OCI-LY7 (cell line): ENCODE measurements at regions of chr15 and their contacts with region 1.

Region 1: DNA sequence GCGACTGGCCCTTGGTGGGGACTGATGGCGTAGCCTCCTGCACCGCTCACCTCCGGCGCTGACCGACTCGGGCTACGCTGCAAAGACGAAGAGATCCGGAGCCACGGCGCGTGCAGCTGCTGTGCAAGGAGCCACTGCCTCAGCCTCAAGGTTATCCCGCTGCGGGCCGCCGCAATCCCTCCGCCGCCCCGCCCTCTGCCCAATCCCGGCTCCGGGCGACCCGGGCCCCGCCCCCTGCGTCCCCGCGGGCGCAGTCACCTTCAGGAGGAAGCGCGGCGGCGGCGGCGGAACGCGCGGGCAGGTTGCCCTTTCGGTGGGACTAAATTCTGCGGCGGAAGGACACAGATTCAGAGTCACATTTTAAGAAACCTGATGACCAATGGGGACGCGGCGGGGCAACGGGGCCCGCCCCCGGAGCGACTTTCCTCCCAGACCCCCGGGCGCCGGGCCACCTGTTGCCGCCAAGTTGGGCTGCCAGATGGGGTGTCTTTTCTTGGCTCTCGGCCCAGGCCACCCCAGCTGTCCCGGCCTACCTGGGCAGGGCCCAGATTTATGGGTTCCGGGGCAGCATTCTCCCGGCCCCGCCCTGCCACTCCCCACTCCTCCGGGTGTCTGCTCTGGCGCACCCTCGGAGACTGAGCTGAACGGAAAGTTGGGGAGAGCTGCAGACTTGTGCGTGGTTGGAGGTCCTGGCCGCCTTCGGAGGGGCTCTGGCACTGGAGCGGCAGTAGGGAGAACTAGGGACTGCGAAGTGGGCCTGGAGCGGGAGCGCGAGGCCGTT is at the start of gene PKM:
- DNase-seq: peak; percentile 100
- H3K4me3 ChIP-seq: peak within 1 kb of the TSS; percentile 89
- H3K27ac ChIP-seq: peak within 1 kb of the TSS; percentile 86
- H3K4me1 ChIP-seq: peaks cover 32% of the 10 kb centered on the region
- CTCF ChIP-seq: no peak
- total RNA-seq, gene PKM: 861 and 917 TPM in 2 replicates

Region 2: DNA sequence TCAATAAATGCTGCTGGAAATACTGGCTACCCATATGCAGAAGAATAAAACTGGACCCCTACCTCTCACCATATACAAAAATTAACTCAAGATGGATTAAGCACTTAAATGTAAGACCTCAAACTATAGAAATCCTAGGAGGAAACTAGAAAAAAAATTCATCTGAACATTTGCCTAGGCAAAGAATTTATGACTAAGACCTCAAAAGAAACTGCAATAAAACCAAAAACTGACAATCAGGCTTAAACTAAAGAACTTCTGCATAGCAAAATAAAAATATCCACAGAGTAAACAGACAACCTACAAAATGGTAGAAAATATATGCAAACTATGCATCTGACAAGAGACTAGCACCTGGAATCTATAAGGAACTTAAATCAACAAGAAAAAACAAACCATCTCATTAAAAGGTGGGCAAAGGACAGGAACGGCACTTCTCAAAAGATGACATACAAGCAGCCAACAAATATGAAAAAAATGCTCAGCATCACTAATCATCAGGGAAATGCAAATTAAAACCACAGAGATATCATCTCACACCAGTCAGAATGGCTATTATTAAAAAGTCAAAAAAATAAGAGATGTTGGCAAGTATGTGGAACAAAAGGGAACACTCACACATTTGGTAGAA is 160.3 kb before region 1 on chr15:
- CTCF ChIA-PET with region 1: no interaction called
- POLR2A ChIA-PET with region 1: interaction called, 3 read pairs
- intact Hi-C with region 1: loop called (anchors 2 kb)
- DNase-seq: peak; percentile 52
- H3K4me3 ChIP-seq: peak overlapping the region; percentile 59
- H3K27ac ChIP-seq: peak overlapping the region; percentile 76
- H3K4me1 ChIP-seq: peaks cover 74% of the 10 kb centered on the region
- CTCF ChIP-seq: no peak

Region 3: DNA sequence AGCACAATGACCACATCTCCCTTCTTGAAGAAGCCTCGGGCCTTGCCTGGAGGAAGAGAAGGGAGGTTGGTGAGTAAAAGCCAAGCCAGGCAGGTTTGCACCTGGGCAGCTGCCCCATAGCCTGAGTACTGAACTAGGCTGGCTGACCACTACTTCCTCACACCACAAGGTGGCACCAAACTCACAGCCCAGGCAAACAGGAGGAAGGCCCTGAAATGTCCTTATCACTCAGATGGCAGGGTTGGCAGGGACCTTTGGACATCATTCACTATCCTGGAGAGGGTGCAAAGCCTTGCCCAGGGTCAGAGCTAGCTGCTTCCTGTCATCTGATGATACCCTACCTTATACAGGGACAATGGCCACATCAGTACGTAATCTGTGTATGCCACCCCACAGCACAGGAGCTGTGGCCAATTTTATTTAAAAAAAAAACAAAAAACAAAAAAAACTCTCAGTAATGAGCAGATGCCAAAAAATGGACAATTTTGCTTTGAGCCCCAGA is 31.5 kb before region 1 on chr15:
- CTCF ChIA-PET with region 1: interaction called, 4 read pairs
- POLR2A ChIA-PET with region 1: no interaction called
- intact Hi-C with region 1: loop called (anchors 2 kb)
- DNase-seq: peak; percentile 72
- H3K4me3 ChIP-seq: no peak overlapping the region
- H3K27ac ChIP-seq: no peak overlapping the region
- H3K4me1 ChIP-seq: peaks cover 10% of the 10 kb centered on the region
- CTCF ChIP-seq: peak; percentile 88

Region 4: DNA sequence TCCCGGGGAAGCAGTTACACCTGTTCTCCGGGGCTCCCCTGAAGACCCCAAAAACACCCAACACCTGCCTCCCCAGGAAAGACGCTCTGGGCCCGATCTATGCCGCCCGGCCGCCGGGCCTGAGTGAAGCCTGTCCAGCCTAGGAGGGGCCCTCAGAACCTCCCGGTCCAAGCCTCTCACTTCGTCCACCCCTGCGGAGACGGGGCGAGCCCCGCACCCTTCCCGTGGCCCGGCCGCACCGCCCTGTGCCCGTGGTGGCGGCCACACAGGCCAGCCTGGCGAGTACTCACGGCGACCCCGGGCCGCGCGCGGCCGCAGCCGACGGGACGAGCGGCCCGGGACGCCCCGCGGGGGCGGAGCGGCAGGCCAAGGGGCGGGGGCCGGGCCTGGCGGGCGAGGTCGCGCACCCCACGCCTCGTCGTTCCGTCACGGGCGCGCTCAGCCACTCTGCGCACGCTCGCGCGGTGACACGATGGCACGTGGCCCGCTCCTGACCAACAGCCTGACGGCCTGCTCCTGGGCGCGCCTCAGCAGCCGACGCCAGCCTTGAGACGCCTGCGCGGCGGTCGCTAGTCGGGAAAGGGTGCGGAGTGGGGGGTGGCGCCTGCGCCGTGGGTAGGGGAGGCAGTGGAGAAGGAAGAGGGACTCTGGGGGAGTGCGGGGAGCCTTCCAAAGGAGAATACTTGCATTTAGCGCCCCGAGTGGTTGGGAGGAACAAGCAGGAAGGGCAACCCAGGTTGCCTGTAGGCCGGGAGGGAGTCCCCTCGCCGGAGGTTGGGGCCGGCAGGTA is 41.2 kb after region 1 on chr15 and contains the start of gene PARP6:
- CTCF ChIA-PET with region 1: no interaction called
- POLR2A ChIA-PET with region 1: interaction called, 8 read pairs
- intact Hi-C with region 1: loop called (anchors 1 kb)
- DNase-seq: peak; percentile 97
- H3K4me3 ChIP-seq: peak within 1 kb of the TSS; percentile 97
- H3K27ac ChIP-seq: peak within 1 kb of the TSS; percentile 42
- H3K4me1 ChIP-seq: peaks cover 25% of the 10 kb centered on the region
- CTCF ChIP-seq: peak; percentile 78
- total RNA-seq, gene PARP6: 53.6 and 58.3 TPM in 2 replicates

Region 5: DNA sequence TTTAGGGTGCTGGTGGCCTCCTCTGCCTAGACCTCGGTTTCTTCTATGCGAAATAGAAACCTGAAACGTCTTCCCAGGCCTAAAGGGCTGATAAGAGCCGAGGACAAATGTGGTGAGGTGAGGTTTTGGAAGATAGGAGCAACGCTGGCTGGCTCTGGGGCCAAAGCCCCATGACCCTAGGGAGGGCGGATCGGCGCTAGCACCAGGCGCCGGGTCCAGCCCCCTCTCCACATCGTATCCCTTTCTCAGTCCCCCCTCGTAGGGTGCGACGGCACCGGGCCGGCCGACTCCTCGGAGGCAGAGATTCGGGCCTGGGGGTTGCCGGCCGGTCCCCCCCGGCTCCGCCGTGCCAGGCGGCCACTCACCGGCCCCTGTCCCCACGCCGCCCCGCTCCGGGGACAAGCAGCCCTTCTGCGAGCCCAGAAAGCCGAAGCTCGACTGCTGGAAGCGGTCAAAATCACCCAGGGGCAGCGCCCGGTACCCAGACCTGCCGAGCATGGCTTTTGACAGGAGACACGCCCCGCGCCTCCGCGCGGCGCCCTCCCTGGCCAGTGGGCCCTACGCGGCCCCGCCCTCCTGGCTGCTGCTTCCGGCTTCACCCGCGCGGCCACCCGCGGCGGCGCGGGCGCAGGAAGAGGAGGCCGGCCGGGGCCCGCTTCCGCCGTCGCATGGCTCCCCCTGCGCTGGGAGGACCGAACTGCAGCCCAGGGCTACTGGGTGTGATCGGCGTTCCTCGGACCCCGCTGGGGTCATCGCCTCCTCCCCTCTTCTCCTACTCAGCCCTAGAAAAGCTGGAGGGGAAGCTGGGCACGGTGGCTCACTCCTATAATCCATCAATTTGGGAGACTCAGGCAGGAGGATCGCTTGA is 1760.7 kb after region 1 on chr15 and contains the start of gene STOML1:
- CTCF ChIA-PET with region 1: no interaction called
- POLR2A ChIA-PET with region 1: no interaction called
- intact Hi-C with region 1: loop called (anchors 5 kb)
- DNase-seq: peak; percentile 95
- H3K4me3 ChIP-seq: peak within 1 kb of the TSS; percentile 97
- H3K27ac ChIP-seq: no peak within 1 kb of the TSS
- H3K4me1 ChIP-seq: peaks cover 38% of the 10 kb centered on the region
- CTCF ChIP-seq: peak; percentile 85
- total RNA-seq, gene STOML1: 5.7 and 8.0 TPM in 2 replicates